Adrenal gland (tissue), 19 donors: ENCODE measurements at regions of chr5 and their contacts with region 1.

Region 1: DNA sequence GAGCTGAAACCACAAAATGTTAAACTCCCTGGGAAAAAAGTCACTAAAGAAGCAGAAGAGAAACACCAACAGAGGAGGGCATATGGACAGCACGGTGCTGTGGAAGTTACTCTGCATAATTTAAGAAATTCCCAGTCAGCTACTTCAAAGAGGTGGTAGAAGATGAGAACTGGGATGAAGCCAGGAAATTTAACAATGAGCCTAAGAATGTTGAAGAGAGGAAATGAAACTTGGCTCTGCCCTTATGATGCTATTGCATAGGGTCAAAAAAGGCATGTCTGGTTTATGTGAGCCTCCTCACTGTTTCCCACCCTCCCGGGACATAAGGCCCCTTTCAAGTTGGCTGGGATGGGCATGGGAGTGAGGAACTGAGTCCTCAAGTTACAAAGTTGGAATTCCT is 25.4 kb upstream of the SNX18 start:
- DNase-seq: no peak
- H3K4me3 ChIP-seq: no peak overlapping the region
- H3K27ac ChIP-seq: no peak overlapping the region
- H3K4me1 ChIP-seq: no peaks in the 10 kb centered on the region
- H3K27me3 ChIP-seq: no peaks in the 10 kb centered on the region
- CTCF ChIP-seq: no peak
- POLR2A ChIP-seq: no peak

Region 2: DNA sequence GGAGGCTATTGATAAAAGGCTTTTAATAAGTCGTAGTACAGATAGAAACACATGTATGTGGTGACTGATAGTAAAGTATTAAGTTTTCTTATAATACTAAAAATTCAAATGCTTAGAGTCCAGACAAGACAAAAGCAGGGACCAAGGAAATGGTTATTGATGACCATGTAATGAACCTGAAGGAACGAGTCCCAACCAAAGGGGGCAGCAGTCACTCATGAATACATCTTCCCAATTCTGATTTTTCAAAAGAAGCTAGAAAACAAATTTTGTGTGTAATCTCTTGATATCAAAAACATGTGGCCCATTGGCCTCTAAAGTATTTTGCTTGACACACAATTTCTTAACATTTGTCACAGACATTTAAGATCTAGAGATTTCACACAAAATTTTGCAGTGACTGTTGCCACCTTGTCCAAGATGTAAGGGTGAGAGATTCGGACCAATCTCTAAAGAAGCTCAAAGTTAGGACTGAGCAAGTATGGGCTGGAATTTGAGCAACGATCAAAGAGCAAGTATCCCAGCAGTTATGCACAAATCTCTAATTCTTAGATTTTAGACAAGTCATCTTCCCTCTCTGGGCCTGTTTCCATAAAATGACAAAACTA is 248.6 kb before region 1 on chr5:
- intact Hi-C with region 1: loop called in 1 of 2 experiments (anchors 10 kb)
- DNase-seq: peak in 6 of 7 donors; percentile 25 to 72 (median 42)
- H3K4me3 ChIP-seq: no peak overlapping the region
- H3K27ac ChIP-seq: no peak overlapping the region
- H3K4me1 ChIP-seq: peaks cover 0 to under 1% of the 10 kb centered on the region in 2 donors
- H3K27me3 ChIP-seq: no peaks in the 10 kb centered on the region
- CTCF ChIP-seq: peak; percentile 47 to 81 (median 71)
- POLR2A ChIP-seq: no peak

Region 3: DNA sequence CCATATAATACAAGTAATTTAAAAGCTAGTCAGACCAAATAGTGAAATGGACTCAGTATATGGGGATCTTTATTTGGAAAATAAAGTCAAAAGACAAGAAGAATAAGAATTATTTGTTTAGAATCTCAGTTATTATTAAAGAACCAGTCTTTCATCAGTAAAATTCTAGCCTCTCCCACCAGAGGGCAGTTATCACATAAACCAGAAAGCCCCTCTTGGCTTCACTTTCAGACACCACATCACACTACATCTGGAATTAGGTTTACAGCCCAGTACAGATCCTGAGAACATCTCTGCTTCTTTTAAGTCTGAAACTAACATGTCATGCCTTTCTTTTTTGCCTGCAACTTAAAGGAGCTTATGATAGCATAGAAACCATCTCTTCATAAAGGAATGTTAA is 48.9 kb before region 1 on chr5:
- intact Hi-C with region 1: loop called in 1 of 2 experiments (anchors 5 kb)
- DNase-seq: peak in 1 of 7 donors; percentile 22
- H3K4me3 ChIP-seq: no peak overlapping the region
- H3K27ac ChIP-seq: no peak overlapping the region
- H3K4me1 ChIP-seq: no peaks in the 10 kb centered on the region
- H3K27me3 ChIP-seq: no peaks in the 10 kb centered on the region
- CTCF ChIP-seq: peak; percentile 37 to 62 (median 52)
- POLR2A ChIP-seq: no peak

Region 4: DNA sequence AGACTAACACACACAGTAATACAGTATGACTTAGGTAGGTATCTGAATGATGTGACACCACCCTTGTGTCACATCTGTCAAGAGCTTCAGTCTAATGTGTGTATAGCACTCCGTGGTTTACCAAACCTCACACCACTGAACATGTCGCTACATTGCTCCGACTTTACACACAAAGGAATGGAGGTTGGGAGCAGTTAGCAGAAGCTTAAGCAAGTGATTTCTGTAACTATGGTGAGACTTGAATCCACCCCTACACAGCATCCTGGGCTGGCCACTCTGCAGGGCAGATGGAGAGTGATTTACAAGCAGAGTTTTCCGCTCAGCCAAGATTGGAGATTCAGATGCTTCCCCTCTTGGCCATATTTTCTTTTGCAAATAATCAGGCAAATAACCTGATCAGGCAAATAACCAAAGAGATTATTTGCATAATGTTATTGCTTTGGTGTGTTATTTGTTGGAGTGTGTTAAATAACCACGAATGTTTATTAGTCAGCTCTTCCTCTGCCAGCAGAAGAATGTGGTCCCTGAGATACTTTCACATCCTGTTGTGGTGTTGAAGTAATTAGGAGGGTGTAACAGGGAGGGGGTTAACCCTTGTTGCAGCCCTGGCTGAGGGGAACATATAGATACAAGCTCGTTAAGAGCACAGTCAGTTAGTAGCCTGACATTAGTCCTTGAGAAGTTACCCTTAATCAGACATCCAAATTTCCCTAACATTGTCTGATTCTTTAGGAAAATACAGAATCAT is 118.2 kb after region 1 on chr5:
- intact Hi-C with region 1: no loop called
- DNase-seq: no peak
- H3K4me3 ChIP-seq: no peak overlapping the region
- H3K27ac ChIP-seq: no peak overlapping the region
- H3K4me1 ChIP-seq: peaks cover 0 to 5% of the 10 kb centered on the region in 2 donors
- H3K27me3 ChIP-seq: no peaks in the 10 kb centered on the region
- CTCF ChIP-seq: no peak
- POLR2A ChIP-seq: no peak